ENCODE measurements at regions of chr9 and their contacts with region 1.

Region 1: GRCh38 chr9:36148311-36149051 is 11.9 kb downstream of the GLIPR2 start:
- DNase-seq: peak; percentile 37 to 78 (median 45)
- ATAC-seq: peak in 1 of 2 donors; percentile 16
- H3K4me3 Mint-ChIP-seq: peak overlapping the region in 7 of 10 donors; percentile 10 to 50 (median 26)
- H3K27ac Mint-ChIP-seq: peak overlapping the region; percentile 41 to 88 (median 80)
- H3K4me1 Mint-ChIP-seq: peaks cover 51 to 95% (median 87%) of the 10 kb centered on the region in 4 donors
- H3K27me3 Mint-ChIP-seq: no peaks in the 10 kb centered on the region

Region 2: GRCh38 chr9:36136272-36136893 is 12.1 kb before region 1 on chr9 and contains the start of gene GLIPR2:
- POLR2A ChIA-PET with region 1: interaction called, 19 read pairs
- DNase-seq: peak; percentile 58 to 81 (median 69)
- ATAC-seq: peak; percentile 94 to 95
- H3K4me3 Mint-ChIP-seq: peak within 1 kb of the TSS; percentile 87 to 97 (median 94)
- H3K27ac Mint-ChIP-seq: peak within 1 kb of the TSS; percentile 76 to 94 (median 88)
- H3K4me1 Mint-ChIP-seq: peaks cover 34 to 54% (median 51%) of the 10 kb centered on the region in 4 donors
- H3K27me3 Mint-ChIP-seq: no peaks in the 10 kb centered on the region
- polyA plus RNA-seq, gene GLIPR2: 43.2 to 78.9 (median 55.3) TPM

Region 3: GRCh38 chr9:36166101-36166927 is 17.8 kb after region 1 on chr9:
- POLR2A ChIA-PET with region 1: interaction called, 19 read pairs
- DNase-seq: peak; percentile 59 to 87 (median 78)
- ATAC-seq: peak; percentile 97 to 99
- H3K4me3 Mint-ChIP-seq: peak overlapping the region; percentile 44 to 83 (median 66)
- H3K27ac Mint-ChIP-seq: peak overlapping the region in 6 of 10 donors; percentile 40 to 89 (median 71)
- H3K4me1 Mint-ChIP-seq: peaks cover 5 to 22% (median 11%) of the 10 kb centered on the region in 4 donors
- H3K27me3 Mint-ChIP-seq: no peaks in the 10 kb centered on the region